ENCODE measurements at regions of chrX and their contacts with region 1.

Region 1: GRCh38 chrX:45186643-45187026 is 14.0 kb downstream of the DIPK2B start:
- DNase-seq: no peak

Region 2: DNA sequence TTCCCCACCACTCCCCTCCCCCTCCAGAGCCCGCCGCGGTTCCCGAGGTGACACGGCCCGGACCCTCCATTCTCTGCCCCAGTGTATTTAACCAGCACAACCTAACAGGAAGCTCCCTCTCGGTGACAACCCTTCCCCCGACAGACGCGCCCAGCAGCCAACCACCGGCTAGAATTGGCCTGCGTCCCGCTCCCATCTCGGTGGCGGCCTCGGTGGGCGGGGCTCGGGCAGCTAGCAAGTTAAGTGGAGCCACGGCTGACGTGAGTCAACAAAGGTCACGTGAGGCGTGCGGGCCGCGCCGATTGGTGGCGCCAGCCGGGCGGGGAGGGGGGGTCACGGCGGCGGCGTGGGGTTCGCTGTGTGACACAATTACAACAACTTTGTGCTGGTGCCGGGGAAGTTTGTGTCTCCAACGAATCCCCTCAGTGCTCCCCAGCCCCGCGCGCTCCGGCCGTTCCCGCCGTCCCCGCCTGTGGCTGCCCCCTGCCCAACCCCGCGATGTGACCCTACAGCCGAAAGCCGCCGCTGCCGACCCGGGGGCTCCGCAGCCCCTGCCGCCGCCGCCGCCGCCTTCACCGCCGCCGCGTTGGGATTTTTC is 313.7 kb before region 1 on chrX and contains the start of gene KDM6A:
- intact Hi-C with region 1: loop called (anchors 2 kb)
- DNase-seq: peak; percentile 92 to 100 (median 100)

Region 3: DNA sequence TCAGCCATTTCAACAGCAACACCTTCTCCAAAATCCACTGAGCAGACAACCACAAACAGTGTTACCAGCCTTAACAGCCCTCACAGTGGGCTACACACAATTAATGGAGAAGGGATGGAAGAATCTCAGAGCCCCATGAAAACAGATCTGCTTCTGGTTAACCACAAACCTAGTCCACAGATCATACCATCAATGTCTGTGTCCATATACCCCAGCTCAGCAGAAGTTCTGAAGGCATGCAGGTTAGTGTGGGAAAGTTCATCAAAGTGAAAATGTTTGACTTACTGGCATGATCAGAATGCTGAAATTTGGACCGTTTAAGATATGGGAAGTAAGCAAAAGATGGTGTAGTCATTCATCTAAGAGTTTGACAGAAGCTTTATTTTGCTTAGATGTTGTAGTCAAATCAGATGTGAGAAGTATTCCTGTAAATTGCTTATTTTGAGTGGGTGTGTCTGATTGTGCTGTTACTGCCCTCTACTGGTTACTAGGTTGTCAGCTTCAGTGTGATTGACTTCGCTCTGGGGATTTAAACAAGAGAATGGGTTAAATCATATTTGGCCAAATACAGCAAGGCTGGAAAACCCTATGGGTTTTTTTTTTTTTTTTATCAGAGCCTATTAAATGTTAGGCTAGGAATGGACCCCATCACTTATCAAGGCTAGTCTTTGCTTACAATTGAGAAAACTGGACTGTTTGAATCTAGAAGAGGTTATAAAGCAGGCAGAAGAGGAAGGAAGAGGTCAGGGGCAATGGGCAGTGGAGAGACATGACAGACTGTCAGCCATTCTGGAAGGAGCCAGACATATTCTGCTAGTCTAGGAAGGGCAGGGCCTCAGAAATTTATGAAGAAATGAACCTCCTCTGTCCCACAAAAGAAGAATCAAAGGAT is 116.3 kb before region 1 on chrX:
- intact Hi-C with region 1: loop called (anchors 10 kb)
- DNase-seq: peak in 9 of 42 donors; percentile 2 to 46 (median 25)

Region 4: GRCh38 chrX:45134315-45134731 is 52.3 kb before region 1 on chrX:
- intact Hi-C with region 1: loop called (anchors 10 kb)
- DNase-seq: peak; percentile 43 to 93 (median 82)

Region 5: DNA sequence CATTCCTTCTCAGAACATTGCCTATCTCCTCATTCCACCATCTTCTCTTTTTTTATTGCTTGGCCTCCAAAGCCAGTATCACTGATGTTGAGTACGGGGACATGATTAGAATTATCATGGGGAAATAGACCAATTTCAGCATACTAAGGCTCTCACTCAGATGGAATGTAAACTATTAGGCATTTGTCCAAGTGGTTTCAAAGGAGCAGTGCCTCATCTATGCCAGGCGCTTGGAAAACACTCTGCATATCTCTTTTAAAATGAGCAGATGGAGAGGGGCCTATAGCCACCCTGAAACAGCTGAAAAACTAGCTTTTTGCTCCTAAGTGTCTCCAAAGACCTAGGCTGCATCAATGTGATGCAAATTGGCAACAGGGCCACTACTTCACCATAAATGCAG is 164.8 kb after region 1 on chrX:
- intact Hi-C with region 1: no loop called
- DNase-seq: no peak

Measured in head of caudate nucleus (tissue), 42 donors.